Caco-2 (cell line): ENCODE measurements at regions of chr9 and their contacts with region 1.

Region 1: GRCh38 chr9:128203024-128203706 is at the start of gene DNM1:
- DNase-seq: peak; percentile 49 to 78
- H3K4me3 ChIP-seq: peak within 1 kb of the TSS; percentile 68
- H3K4me3 Mint-ChIP-seq: peak within 1 kb of the TSS; percentile 68
- H3K27ac Mint-ChIP-seq: no peak within 1 kb of the TSS
- H3K4me1 ChIP-seq: peaks cover 6% of the 10 kb centered on the region; the same call in 1 of the 2 replicates
- H3K4me1 Mint-ChIP-seq: peaks cover 16% of the 10 kb centered on the region
- H3K27me3 ChIP-seq: no peaks in the 10 kb centered on the region
- H3K27me3 Mint-ChIP-seq: peaks cover 5% of the 10 kb centered on the region
- CTCF ChIP-seq: peak; percentile 8 to 88
- total RNA-seq, gene DNM1: 3.9 and 5.2 TPM in 2 replicates

Region 2: GRCh38 chr9:128182893-128183588 is 20.1 kb before region 1 on chr9:
- CTCF ChIA-PET with region 1: interaction called, 11 read pairs
- POLR2A ChIA-PET with region 1: no interaction called
- intact Hi-C with region 1: no loop called
- DNase-seq: no peak
- H3K4me3 ChIP-seq: no peak overlapping the region
- H3K4me3 Mint-ChIP-seq: no peak overlapping the region
- H3K27ac Mint-ChIP-seq: no peak overlapping the region
- H3K4me1 ChIP-seq: no peaks in the 10 kb centered on the region
- H3K4me1 Mint-ChIP-seq: no peaks in the 10 kb centered on the region
- H3K27me3 ChIP-seq: no peaks in the 10 kb centered on the region
- H3K27me3 Mint-ChIP-seq: no peaks in the 10 kb centered on the region
- CTCF ChIP-seq: no peak

Region 3: DNA sequence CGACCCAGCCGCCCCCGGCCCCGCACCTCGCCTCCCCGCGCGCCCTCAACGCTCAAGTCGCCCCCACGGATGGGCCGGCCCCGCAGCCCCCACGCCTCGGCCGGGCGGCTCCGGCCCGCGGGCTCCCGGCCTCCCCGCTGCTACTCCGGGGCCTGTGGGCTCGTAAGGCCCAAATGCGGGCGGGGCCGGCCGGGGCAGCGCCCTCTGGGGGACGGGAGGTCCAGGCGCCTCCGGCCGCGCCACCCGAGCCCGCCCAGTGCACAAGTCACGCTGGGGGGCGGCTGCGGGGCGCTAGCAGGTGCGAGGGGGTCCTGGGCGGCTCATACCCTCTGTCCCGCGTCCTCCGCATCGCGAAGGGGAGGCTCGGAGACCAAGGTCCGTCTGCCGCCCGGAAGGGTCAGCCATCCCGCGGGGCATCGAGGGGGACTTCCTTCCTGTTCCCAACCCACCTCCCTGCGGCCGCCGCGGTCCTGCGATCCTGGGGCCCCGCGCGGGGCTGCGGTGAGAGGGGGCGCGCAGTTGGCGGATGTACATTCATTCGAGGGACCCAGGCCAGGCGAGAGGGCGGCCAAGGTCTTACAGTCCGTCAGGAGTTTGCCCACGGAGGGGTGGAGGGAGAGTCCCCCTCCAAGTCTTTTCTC is 11.6 kb before region 1 on chr9 and contains the start of gene CIZ1:
- CTCF ChIA-PET with region 1: interaction called, 5 read pairs
- POLR2A ChIA-PET with region 1: no interaction called
- intact Hi-C with region 1: loop called (anchors 1 kb)
- DNase-seq: peak; percentile 74 to 88
- H3K4me3 ChIP-seq: peak within 1 kb of the TSS; percentile 98
- H3K4me3 Mint-ChIP-seq: peak within 1 kb of the TSS; percentile 89
- H3K27ac Mint-ChIP-seq: peak within 1 kb of the TSS; percentile 96
- H3K4me1 ChIP-seq: 0 out of 2 replicates have a peak, but pooled peaks cover 7% of the 10 kb centered on the region
- H3K4me1 Mint-ChIP-seq: peaks cover 8% of the 10 kb centered on the region
- H3K27me3 ChIP-seq: no peaks in the 10 kb centered on the region
- H3K27me3 Mint-ChIP-seq: no peaks in the 10 kb centered on the region
- CTCF ChIP-seq: peak; percentile 61 to 79
- total RNA-seq, gene CIZ1: 154 and 187 TPM in 2 replicates